A549 (cell line): ENCODE measurements at regions of chr2 and their contacts with region 1.

Region 1: GRCh38 chr2:68031542-68032160 is 31.2 kb downstream of the C1D start:
- DNase-seq: peak; percentile 40 to 57
- ATAC-seq: peak; percentile 80 to 90; a peak in 5 of 6 replicates
- H3K4me3 ChIP-seq: no peak overlapping the region
- H3K27ac ChIP-seq: no peak overlapping the region
- H3K4me1 ChIP-seq: no peaks in the 10 kb centered on the region
- CTCF ChIP-seq: peak; percentile 90
- EP300 ChIP-seq: no peak
- POLR2A ChIP-seq: no peak
- RAD21 ChIP-seq: peak; percentile 91 to 94

Region 2: DNA sequence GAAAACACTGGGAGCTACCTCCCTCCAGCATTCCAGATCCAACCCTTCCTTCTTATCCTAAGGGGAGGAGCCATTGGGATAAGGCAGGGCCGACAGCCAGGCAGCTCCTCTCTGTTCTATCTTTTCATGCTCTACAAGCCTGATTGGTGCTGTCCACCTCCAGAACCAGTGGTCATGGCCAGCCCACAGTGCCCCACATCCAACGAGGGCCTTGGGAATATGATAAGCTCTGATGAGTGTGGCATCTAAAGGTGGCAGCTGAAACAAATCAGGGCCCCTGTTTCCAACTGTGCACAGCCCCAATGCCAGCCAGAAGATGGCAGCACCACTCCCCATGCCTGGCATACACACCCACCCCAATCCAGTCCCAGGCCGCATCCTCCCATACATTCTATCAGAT is 298.1 kb before region 1 on chr2:
- CTCF ChIA-PET with region 1: interaction called, 24 read pairs
- POLR2A ChIA-PET with region 1: no interaction called
- DNase-seq: peak; percentile 21 to 30
- ATAC-seq: peak; percentile 76 to 98; a peak in 5 of 6 replicates
- H3K4me3 ChIP-seq: no peak overlapping the region
- H3K27ac ChIP-seq: no peak overlapping the region
- H3K4me1 ChIP-seq: no peaks in the 10 kb centered on the region
- CTCF ChIP-seq: peak; percentile 41; the same call in 2 of the 3 replicates
- EP300 ChIP-seq: no peak
- POLR2A ChIP-seq: no peak
- RAD21 ChIP-seq: peak; percentile 33 to 44; a peak in 3 of 5 replicates

Region 3: DNA sequence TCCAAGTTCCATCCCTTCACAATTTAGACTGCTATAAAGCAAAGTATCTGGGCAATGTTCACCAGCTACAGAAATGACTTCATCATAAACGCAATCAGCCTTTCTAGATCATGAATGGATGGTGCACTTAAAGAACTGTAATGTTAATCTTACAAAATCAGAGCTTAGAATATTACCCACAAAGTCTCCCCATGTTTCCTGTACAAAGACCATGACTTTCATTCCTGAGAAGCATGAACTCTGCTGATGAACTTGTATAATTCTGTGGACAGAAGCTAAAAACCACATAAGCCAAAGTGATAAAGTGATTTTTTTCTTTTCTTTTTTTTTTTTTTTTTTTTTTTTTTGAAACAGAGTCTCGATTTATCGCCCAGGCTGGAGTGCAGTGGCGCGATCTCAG is 22.1 kb before region 1 on chr2:
- CTCF ChIA-PET with region 1: interaction called, 15 read pairs
- POLR2A ChIA-PET with region 1: no interaction called
- DNase-seq: no peak
- ATAC-seq: no peak
- H3K4me3 ChIP-seq: no peak overlapping the region
- H3K27ac ChIP-seq: no peak overlapping the region
- H3K4me1 ChIP-seq: no peaks in the 10 kb centered on the region
- CTCF ChIP-seq: no peak
- EP300 ChIP-seq: no peak
- POLR2A ChIP-seq: no peak
- RAD21 ChIP-seq: no peak